ENCODE measurements at regions of chr15 and their contacts with region 1.

Region 1: DNA sequence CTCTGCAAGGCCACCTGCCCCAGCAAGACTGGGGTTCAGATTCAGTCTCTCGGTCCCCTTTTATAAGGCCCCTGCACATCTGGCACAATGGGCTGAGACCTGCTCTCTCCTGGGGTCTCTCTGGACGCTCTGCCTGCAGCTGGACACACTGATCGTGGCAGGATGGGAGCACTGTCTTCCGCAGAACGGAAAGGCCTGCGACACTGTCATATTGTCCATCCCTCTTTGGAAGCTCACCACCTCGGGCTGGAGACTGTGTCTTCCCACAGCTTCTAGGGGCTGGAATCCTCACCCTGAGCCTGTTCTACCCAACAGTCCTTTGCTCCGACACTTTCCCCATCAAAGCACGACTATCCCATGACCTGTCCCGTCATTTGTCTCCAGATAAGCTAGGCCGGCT is 11.5 kb upstream of the IGDCC4 start:
- DNase-seq: no peak
- ATAC-seq: no peak
- H3K4me3 ChIP-seq: no peak overlapping the region
- H3K27ac ChIP-seq: no peak overlapping the region
- H3K4me1 ChIP-seq: no peaks in the 10 kb centered on the region
- H3K27me3 ChIP-seq: no peaks in the 10 kb centered on the region
- CTCF ChIP-seq: no peak

Region 2: GRCh38 chr15:65476903-65477302 is 42.7 kb after region 1 on chr15:
- CTCF ChIA-PET with region 1: no interaction called
- POLR2A ChIA-PET with region 1: interaction called, 13 read pairs
- in situ Hi-C with region 1: no loop called
- intact Hi-C with region 1: no loop called
- DNase-seq: no peak
- ATAC-seq: no peak
- H3K4me3 ChIP-seq: no peak overlapping the region
- H3K27ac ChIP-seq: no peak overlapping the region
- H3K4me1 ChIP-seq: no peaks in the 10 kb centered on the region
- H3K27me3 ChIP-seq: no peaks in the 10 kb centered on the region
- CTCF ChIP-seq: no peak

Region 3: DNA sequence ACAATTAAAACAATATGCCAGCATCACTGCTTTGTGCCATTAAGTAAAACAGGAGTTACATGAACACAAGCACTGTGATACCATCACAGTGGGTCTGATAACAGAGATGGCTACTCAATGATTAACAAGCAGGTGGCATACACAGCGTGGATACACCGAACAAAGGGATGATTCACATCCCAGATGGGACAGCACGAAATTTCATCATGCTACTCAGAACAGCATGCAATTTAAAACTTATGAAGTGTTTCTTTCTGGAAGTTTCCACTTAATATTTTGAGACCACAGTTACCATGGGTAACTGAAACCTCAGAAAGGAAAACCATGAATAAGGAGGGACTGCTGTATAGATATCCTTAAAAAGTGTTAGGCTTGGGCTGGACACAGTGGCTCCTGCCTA is 232.1 kb after region 1 on chr15:
- CTCF ChIA-PET with region 1: no interaction called
- POLR2A ChIA-PET with region 1: no interaction called
- in situ Hi-C with region 1: no loop called
- intact Hi-C with region 1: no loop called
- DNase-seq: no peak
- ATAC-seq: no peak
- H3K4me3 ChIP-seq: no peak overlapping the region
- H3K27ac ChIP-seq: no peak overlapping the region
- H3K4me1 ChIP-seq: no peaks in the 10 kb centered on the region
- H3K27me3 ChIP-seq: no peaks in the 10 kb centered on the region
- CTCF ChIP-seq: no peak

Region 4: GRCh38 chr15:65792130-65792987 is 358.2 kb after region 1 on chr15 and contains the start of gene DENND4A:
- CTCF ChIA-PET with region 1: no interaction called
- POLR2A ChIA-PET with region 1: no interaction called
- in situ Hi-C with region 1: no loop called
- intact Hi-C with region 1: no loop called
- DNase-seq: peak; percentile 92
- ATAC-seq: peak; percentile 94
- H3K4me3 ChIP-seq: peak within 1 kb of the TSS; percentile 79 to 93
- H3K27ac ChIP-seq: peak within 1 kb of the TSS; percentile 95
- H3K4me1 ChIP-seq: peaks cover 25% of the 10 kb centered on the region
- H3K27me3 ChIP-seq: no peaks in the 10 kb centered on the region
- CTCF ChIP-seq: no peak
- total RNA-seq, gene DENND4A: 14.4 TPM